Adrenal gland (tissue), 19 donors: ENCODE measurements at regions of chr9 and their contacts with region 1.

Region 1: GRCh38 chr9:105447814-105448812 is at the start of gene FSD1L:
- DNase-seq: peak; percentile 93 to 97 (median 96)
- H3K4me3 ChIP-seq: peak within 1 kb of the TSS; percentile 28 to 98 (median 77)
- H3K27ac ChIP-seq: peak within 1 kb of the TSS; percentile 44 to 88 (median 70)
- H3K4me1 ChIP-seq: peaks cover 0 to 18% of the 10 kb centered on the region in 2 donors
- H3K27me3 ChIP-seq: no peaks in the 10 kb centered on the region
- CTCF ChIP-seq: peak in 3 of 6 experiments; percentile 31 to 47 (median 35)
- POLR2A ChIP-seq: peak; percentile 4 to 77
- total RNA-seq, gene FSD1L: 3.3 to 11.1 (median 6.7) TPM

Region 2: GRCh38 chr9:105414947-105415661 is 33.0 kb before region 1 on chr9:
- intact Hi-C with region 1: no loop called
- DNase-seq: peak; percentile 42 to 76 (median 62)
- H3K4me3 ChIP-seq: no peak overlapping the region
- H3K27ac ChIP-seq: no peak overlapping the region
- H3K4me1 ChIP-seq: peaks cover 3 to 4% of the 10 kb centered on the region in 2 donors
- H3K27me3 ChIP-seq: no peaks in the 10 kb centered on the region
- CTCF ChIP-seq: peak; percentile 83 to 96 (median 92)
- POLR2A ChIP-seq: no peak

Region 3: GRCh38 chr9:105557771-105558610 is 109.9 kb after region 1 on chr9 and contains the start of gene FKTN:
- intact Hi-C with region 1: loop called in 1 of 2 experiments (anchors 10 kb)
- DNase-seq: peak; percentile 86 to 93 (median 88)
- H3K4me3 ChIP-seq: peak within 1 kb of the TSS; percentile 17 to 90 (median 64)
- H3K27ac ChIP-seq: peak within 1 kb of the TSS in 3 of 5 donors; percentile 13 to 63 (median 50)
- H3K4me1 ChIP-seq: peaks cover 5 to 7% of the 10 kb centered on the region in 2 donors
- H3K27me3 ChIP-seq: no peaks in the 10 kb centered on the region
- CTCF ChIP-seq: no peak
- POLR2A ChIP-seq: peak in 1 of 2 donors; percentile 17
- total RNA-seq, gene FKTN: 8.7 to 39.1 (median 17.8) TPM